K562 (cell line): ENCODE measurements at regions of chr2 and their contacts with region 1.

Region 1: GRCh38 chr2:165953655-165954606 is at the start of gene TTC21B:
- DNase-seq: peak; percentile 96 to 97 (median 96)
- ATAC-seq: peak; percentile 98
- H3K4me3 ChIP-seq: peak within 1 kb of the TSS; percentile 82
- H3K27ac ChIP-seq: peak within 1 kb of the TSS; percentile 83
- H3K4me1 ChIP-seq: peaks cover 0 to 17% of the 10 kb centered on the region in 2 experiments; a peak in 3 of 5 replicates
- H3K27me3 ChIP-seq: no peaks in the 10 kb centered on the region
- CTCF ChIP-seq: peak; percentile 80 to 88 (median 87)
- EP300 ChIP-seq: no peak
- POLR2A ChIP-seq: peak; percentile 90
- RAD21 ChIP-seq: peak; percentile 44 to 50
- polyA plus RNA-seq, gene TTC21B: 5.2 to 8.7 TPM

Region 2: DNA sequence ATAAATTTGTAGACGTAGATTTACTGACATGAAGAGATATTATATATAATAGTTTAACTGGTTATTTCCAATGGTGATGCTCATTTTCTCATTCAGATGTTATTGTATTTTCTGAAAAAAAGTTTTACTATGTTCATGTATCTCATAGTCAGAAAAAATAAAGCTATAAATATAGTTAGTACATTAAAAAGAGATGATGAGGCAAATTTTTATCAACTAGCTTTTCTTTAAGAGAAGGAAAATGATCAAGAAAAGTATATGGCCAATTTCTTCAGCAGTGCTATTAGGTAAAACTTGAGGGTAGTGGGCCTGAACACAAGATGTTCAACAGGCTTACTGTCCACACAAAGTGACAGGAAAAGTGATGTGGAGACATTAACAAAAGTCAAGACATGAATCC is 12.1 kb before region 1 on chr2:
- CTCF ChIA-PET with region 1: interaction called, 3 read pairs
- POLR2A ChIA-PET with region 1: interaction called, 20 read pairs
- in situ Hi-C with region 1: no loop called
- intact Hi-C with region 1: no loop called
- DNase-seq: no peak
- ATAC-seq: no peak
- H3K4me3 ChIP-seq: no peak overlapping the region
- H3K27ac ChIP-seq: no peak overlapping the region
- H3K4me1 ChIP-seq: no peaks in the 10 kb centered on the region
- H3K27me3 ChIP-seq: no peaks in the 10 kb centered on the region
- CTCF ChIP-seq: no peak
- EP300 ChIP-seq: no peak
- POLR2A ChIP-seq: no peak
- RAD21 ChIP-seq: no peak

Region 3: DNA sequence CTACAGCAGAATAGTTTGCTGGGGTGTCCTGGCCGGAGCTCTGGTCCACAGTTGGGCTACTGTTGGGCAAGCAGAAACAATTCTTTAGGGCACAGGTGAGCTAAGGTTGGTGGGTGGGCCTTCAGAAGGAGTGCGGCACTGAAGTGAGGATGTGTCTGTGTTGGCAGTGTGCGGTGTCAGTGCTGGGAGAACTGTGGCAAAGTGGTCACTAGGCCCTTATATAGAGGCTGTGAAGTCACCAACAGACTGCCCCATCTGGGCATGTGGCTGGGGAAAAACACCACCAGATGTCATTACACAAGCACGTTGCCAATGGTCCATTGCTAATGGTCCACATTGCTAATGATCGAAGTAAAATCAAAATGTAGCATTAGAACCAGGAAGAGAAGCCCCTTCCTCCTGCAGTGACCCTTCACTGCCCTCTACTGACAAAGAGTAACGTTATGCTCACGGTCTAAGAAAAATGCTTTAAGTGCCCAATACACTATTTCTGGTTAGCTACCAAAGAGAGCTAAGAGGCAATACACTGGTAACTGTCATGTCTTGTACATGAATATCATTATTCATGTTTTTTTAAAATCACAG is 152.6 kb after region 1 on chr2:
- CTCF ChIA-PET with region 1: interaction called, 3 read pairs
- POLR2A ChIA-PET with region 1: no interaction called
- in situ Hi-C with region 1: no loop called
- intact Hi-C with region 1: loop called (anchors 5 kb)
- DNase-seq: peak in 2 of 4 experiments; percentile 31 to 67
- ATAC-seq: peak; percentile 94
- H3K4me3 ChIP-seq: no peak overlapping the region
- H3K27ac ChIP-seq: no peak overlapping the region
- H3K4me1 ChIP-seq: no peaks in the 10 kb centered on the region
- H3K27me3 ChIP-seq: no peaks in the 10 kb centered on the region
- CTCF ChIP-seq: peak; percentile 62 to 68 (median 64)
- EP300 ChIP-seq: no peak
- POLR2A ChIP-seq: no peak
- RAD21 ChIP-seq: peak; percentile 31 to 65

Region 4: GRCh38 chr2:166127217-166128155 is 173.6 kb after region 1 on chr2 and contains the start of gene SCN1A:
- CTCF ChIA-PET with region 1: interaction called, 16 read pairs
- POLR2A ChIA-PET with region 1: interaction called, 4 read pairs
- in situ Hi-C with region 1: no loop called
- intact Hi-C with region 1: loop called (anchors 5 kb)
- DNase-seq: peak; percentile 18 to 41 (median 30)
- ATAC-seq: peak; percentile 58; the same call in 2 of the 3 replicates
- H3K4me3 ChIP-seq: no peak within 1 kb of the TSS
- H3K27ac ChIP-seq: no peak within 1 kb of the TSS
- H3K4me1 ChIP-seq: no peaks in the 10 kb centered on the region
- H3K27me3 ChIP-seq: no peaks in the 10 kb centered on the region
- CTCF ChIP-seq: peak; percentile 38 to 82 (median 64); a peak in 5 of 6 replicates
- EP300 ChIP-seq: no peak
- POLR2A ChIP-seq: no peak
- RAD21 ChIP-seq: peak; percentile 54 to 55
- polyA plus RNA-seq, gene SCN1A: not detected

Region 5: DNA sequence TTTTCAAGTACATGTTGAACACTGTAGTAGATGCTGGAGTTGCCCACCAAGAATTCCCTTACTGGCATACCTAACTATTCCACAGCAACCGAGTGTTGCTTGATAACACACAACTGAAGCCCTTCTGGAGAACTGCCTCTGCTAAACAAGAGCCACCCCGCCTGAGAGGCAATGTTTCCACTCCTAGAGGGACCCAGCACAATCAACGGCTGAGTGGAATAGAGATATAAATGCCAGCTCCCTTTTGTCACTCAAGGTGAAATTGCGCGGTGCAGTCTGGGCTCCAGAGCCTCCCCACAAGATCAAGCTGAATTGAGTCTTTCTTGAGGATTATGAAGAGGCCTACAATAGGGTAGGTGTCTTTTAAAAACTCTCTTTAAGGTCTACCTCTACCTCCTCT is 470.9 kb after region 1 on chr2:
- CTCF ChIA-PET with region 1: no interaction called
- POLR2A ChIA-PET with region 1: no interaction called
- in situ Hi-C with region 1: loop called (anchors 25 kb)
- intact Hi-C with region 1: loop called (anchors 10 kb)
- DNase-seq: no peak
- ATAC-seq: peak; percentile 53
- H3K4me3 ChIP-seq: no peak overlapping the region
- H3K27ac ChIP-seq: no peak overlapping the region
- H3K4me1 ChIP-seq: no peaks in the 10 kb centered on the region
- H3K27me3 ChIP-seq: no peaks in the 10 kb centered on the region
- CTCF ChIP-seq: no peak
- EP300 ChIP-seq: no peak
- POLR2A ChIP-seq: no peak
- RAD21 ChIP-seq: no peak